Activated T-helper 1 cell treated with anti-CD3 and anti-CD28 coated beads, Interleukin-12 subunit alpha, Interleukin-12 subunit beta, Interleukin-2, Interleukin-4 antibody, amounts not matched to agents 30 ng/mL and 10 ng/mL and 1 ng/mL, durations not matched to agents 14 hours and 24 hours and 36 hours (primary cell): ENCODE measurements at regions of chr1 and their contacts with region 1.

Region 1: GRCh38 chr1:112955781-112956543 is at the start of gene SLC16A1:
- DNase-seq: peak; percentile 90
- H3K4me3 Mint-ChIP-seq: peak within 1 kb of the TSS; percentile 90
- H3K27ac Mint-ChIP-seq: peak within 1 kb of the TSS; percentile 100
- H3K4me1 Mint-ChIP-seq: peaks cover 59% of the 10 kb centered on the region
- H3K27me3 Mint-ChIP-seq: no peaks in the 10 kb centered on the region
- total RNA-seq, gene SLC16A1: 73.6 and 77.4 TPM in 2 replicates

Region 2: GRCh38 chr1:112395821-112396652 is 559.9 kb before region 1 on chr1 and contains the start of gene CTTNBP2NL:
- intact Hi-C with region 1: loop called (anchors 2 kb)
- DNase-seq: peak; percentile 76
- H3K4me3 Mint-ChIP-seq: peak within 1 kb of the TSS; percentile 99
- H3K27ac Mint-ChIP-seq: peak within 1 kb of the TSS; percentile 85
- H3K4me1 Mint-ChIP-seq: peaks cover 49% of the 10 kb centered on the region
- H3K27me3 Mint-ChIP-seq: peaks cover 7% of the 10 kb centered on the region
- total RNA-seq, gene CTTNBP2NL: 3.9 and 4.7 TPM in 2 replicates

Region 3: DNA sequence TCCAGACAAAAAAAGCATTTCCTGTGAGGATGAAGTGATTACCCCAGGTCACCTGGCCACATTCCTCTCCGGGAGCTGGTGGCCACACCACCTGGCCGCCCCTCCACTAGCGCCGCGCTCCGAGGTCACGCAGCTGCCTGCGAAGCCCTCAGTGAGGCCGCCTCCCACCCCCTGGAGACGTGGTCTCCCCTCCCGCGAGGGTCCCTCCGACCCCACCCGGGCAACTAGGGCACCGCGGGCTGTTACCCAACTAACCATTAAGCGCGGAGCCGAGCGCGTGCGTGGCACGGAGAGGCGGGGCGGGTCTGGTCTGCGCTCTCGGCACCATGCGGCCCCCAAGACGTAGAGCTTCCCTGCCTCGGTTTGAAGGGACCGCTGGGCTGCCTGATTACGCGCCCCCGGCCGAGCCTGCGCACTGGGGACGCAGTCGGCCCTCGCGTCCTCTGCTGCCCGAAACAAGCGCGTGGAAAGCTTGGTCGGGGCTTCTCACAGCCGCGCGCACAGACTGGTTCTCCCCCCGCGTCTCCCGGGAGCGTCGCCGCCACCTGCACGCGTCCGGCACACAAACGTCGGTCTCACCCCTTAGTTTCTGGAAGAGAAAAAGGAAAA is 106.4 kb before region 1 on chr1:
- intact Hi-C with region 1: no loop called
- DNase-seq: no peak
- H3K4me3 Mint-ChIP-seq: no peak overlapping the region
- H3K27ac Mint-ChIP-seq: no peak overlapping the region
- H3K4me1 Mint-ChIP-seq: no peaks in the 10 kb centered on the region
- H3K27me3 Mint-ChIP-seq: peaks cover 40% of the 10 kb centered on the region

Region 4: DNA sequence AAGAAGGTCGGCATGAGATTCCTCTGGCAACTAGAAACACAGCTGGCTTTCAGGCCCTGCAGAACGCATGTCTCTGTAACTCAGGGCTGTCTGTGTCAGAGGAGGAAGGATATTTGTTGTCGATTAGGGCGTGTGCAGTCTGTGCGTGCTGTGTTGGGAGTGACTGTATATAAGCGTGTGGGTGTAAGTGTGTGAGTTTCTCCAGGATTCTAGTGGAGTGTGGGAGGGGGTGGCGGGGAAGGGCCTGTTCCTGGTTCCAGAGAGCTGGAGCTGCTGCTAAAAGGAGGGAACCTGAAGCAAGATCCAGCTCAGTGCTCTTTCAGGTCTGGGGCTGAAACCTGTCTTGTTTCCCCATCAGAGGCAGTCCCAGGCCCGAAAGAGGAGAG is 74.2 kb before region 1 on chr1:
- intact Hi-C with region 1: loop called (anchors 1 kb)
- DNase-seq: no peak
- H3K4me3 Mint-ChIP-seq: no peak overlapping the region
- H3K27ac Mint-ChIP-seq: no peak overlapping the region
- H3K4me1 Mint-ChIP-seq: no peaks in the 10 kb centered on the region
- H3K27me3 Mint-ChIP-seq: peaks cover 18% of the 10 kb centered on the region

Region 5: GRCh38 chr1:113042285-113043143 is 86.6 kb after region 1 on chr1:
- intact Hi-C with region 1: loop called (anchors 10 kb)
- DNase-seq: no peak
- H3K4me3 Mint-ChIP-seq: peak overlapping the region; percentile 24
- H3K27ac Mint-ChIP-seq: no peak overlapping the region
- H3K4me1 Mint-ChIP-seq: peaks cover 38% of the 10 kb centered on the region
- H3K27me3 Mint-ChIP-seq: no peaks in the 10 kb centered on the region

Region 6: DNA sequence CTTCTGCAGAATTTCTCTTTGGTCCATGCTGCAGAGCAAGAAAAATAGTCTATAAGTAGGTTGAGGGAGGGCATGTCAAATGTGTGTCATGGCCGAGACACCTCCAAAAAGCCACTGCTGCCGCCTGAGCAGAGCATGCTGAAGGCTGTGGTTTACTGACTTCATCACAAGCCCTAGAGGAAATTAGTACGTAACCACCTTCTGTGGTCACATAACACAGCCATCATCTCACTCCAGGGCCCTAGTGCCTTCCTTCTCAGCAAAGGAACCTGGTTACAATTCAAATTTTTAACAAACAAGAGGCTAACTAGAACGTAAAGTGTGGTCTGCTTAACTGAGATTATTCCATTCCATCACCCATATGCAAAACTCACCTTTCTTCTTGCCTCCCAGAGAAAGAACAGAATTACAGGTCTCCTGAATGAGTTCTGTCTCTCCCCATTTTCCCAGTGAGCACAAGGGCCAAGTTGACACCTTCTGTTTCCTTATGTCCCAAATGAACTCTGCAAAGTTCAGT is 915.7 kb after region 1 on chr1 and contains the start of gene PTPN22:
- intact Hi-C with region 1: loop called (anchors 5 kb)
- DNase-seq: peak; percentile 80
- H3K4me3 Mint-ChIP-seq: peak within 1 kb of the TSS; percentile 93
- H3K27ac Mint-ChIP-seq: peak within 1 kb of the TSS; percentile 98
- H3K4me1 Mint-ChIP-seq: peaks cover 73% of the 10 kb centered on the region
- H3K27me3 Mint-ChIP-seq: no peaks in the 10 kb centered on the region
- total RNA-seq, gene PTPN22: 66.2 and 66.7 TPM in 2 replicates